Activated CD8-positive, alpha-beta T cell treated with anti-CD3 and anti-CD28 coated beads, Interleukin-2, amount 10 ng/mL, durations not matched to agents 7 days and 5 days (primary cell): ENCODE measurements at regions of chr10 and their contacts with region 1.

Region 1: DNA sequence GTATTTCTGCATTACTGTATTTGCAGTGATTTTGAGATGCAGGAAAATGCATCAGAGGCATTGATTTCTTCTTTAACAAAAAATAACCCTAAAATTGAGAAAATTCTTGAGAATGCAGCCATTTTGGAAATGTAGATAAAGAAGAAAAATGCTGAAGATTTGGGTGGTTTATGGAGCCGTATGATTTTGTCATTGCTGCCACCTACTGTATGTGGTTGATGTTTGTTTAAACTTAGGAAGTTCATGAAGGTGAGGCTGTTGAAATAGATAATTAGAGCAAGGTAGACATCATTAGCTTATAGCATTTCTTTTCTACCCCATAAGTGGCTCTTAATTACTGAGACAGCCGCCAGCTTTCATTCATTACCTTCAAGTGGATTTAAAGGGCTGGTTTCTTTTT is 92.1 kb upstream of the SAMD8 start:
- DNase-seq: peak; percentile 47
- ATAC-seq: peak; percentile 57
- H3K4me3 Mint-ChIP-seq: no peak overlapping the region
- H3K27ac Mint-ChIP-seq: no peak overlapping the region
- H3K4me1 Mint-ChIP-seq: peaks cover 48% of the 10 kb centered on the region
- H3K27me3 Mint-ChIP-seq: no peaks in the 10 kb centered on the region

Region 2: GRCh38 chr10:74419958-74420375 is 599.4 kb before region 1 on chr10:
- CTCF ChIA-PET with region 1: interaction called, 13 read pairs
- POLR2A ChIA-PET with region 1: no interaction called
- DNase-seq: peak; percentile 54
- ATAC-seq: no peak
- H3K4me3 Mint-ChIP-seq: no peak overlapping the region
- H3K27ac Mint-ChIP-seq: no peak overlapping the region
- H3K4me1 Mint-ChIP-seq: peaks cover 11% of the 10 kb centered on the region
- H3K27me3 Mint-ChIP-seq: no peaks in the 10 kb centered on the region

Region 3: DNA sequence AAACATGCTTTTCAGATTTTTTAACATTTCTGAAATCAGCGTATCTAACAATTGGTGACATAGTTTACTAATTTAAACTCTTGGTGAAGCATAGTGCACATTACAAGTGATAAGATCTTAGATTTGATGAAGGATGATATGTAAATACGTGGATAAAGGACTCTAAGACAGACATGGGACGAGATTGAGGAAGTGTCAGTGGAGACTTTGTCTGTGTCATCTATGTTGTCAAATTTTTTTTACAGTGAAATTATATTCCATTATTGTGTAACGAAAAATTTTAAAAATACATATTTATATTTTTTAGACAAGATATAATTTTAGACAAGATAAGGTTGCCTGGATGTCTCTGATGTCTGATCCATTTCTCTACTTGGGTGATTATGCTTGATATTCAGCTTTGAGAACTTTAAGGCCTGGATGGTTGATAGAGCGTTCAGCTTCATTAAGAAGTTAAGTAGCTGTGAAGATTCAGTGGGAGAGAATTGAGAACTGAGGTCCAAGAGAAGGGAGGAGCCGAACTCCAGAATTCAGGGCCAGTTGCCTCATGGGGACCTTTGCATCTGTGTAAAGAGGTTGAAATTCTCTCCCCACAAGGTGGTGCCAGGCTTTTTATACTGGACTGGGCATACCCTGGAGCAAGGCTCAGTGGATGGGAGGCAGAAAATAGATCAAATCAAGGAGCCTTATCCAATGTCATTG is 130.3 kb before region 1 on chr10:
- CTCF ChIA-PET with region 1: interaction called, 27 read pairs
- POLR2A ChIA-PET with region 1: no interaction called
- DNase-seq: no peak
- ATAC-seq: no peak
- H3K4me3 Mint-ChIP-seq: no peak overlapping the region
- H3K27ac Mint-ChIP-seq: no peak overlapping the region
- H3K4me1 Mint-ChIP-seq: peaks cover 20% of the 10 kb centered on the region
- H3K27me3 Mint-ChIP-seq: no peaks in the 10 kb centered on the region

Region 4: GRCh38 chr10:74977913-74978847 is 41.2 kb before region 1 on chr10:
- CTCF ChIA-PET with region 1: interaction called, 15 read pairs
- POLR2A ChIA-PET with region 1: no interaction called
- DNase-seq: peak; percentile 78
- ATAC-seq: peak; percentile 90
- H3K4me3 Mint-ChIP-seq: peak overlapping the region; percentile 62
- H3K27ac Mint-ChIP-seq: peak overlapping the region; percentile 44
- H3K4me1 Mint-ChIP-seq: peaks cover 53% of the 10 kb centered on the region
- H3K27me3 Mint-ChIP-seq: no peaks in the 10 kb centered on the region

Region 5: DNA sequence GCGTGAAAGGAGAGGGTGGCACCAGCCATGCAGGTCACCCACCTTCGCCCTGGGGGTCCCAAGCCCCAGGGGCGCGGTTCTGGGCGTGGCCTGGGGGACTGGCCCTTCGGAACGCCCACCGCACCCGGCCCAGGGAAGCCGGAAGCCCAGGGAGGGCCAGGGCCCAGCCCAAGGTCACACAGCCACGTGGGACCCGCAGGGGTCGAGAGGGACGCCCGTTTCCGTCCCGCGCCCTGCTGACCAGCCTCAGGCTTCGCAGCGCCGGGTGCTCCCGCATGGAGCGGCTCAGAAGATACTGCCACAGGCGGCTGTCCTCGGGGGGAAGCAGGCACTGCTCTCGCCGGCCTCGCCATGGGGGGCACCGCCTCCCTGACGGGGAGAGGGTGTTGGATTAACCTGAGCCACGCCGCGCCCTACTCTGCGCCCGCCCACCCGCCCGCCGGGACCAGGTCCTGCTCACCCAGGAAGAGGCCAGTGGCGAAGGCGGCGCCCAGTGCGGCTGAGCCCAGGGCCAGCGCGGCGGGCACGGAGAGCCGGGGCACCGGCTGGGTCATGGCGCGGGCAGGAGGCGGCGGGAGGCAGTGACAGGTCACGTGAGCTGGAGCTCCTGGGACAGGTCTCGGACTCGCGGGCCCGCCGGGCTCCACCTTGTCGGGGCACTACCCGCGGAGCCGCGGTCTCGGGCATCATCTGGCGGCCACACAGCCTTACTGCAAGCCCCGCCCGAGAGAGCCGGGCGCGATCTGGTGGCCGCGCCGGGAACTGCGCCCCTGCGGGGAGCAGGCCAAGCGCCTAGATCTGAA is 216.2 kb after region 1 on chr10 and contains the start of gene COMTD1:
- CTCF ChIA-PET with region 1: interaction called, 19 read pairs
- POLR2A ChIA-PET with region 1: interaction called, 3 read pairs
- DNase-seq: peak; percentile 97
- ATAC-seq: peak; percentile 71
- H3K4me3 Mint-ChIP-seq: peak within 1 kb of the TSS; percentile 83
- H3K27ac Mint-ChIP-seq: peak within 1 kb of the TSS; percentile 91
- H3K4me1 Mint-ChIP-seq: peaks cover 31% of the 10 kb centered on the region
- H3K27me3 Mint-ChIP-seq: no peaks in the 10 kb centered on the region
- total RNA-seq, gene COMTD1: 58.6 to 62.5 TPM